HepG2 (cell line): ENCODE measurements at regions of chr10 and their contacts with region 1.

Region 1: GRCh38 chr10:57657164-57657765 is 610.4 kb downstream of the IPMK start:
- DNase-seq: peak; percentile 53
- ATAC-seq: peak; percentile 93
- H3K4me3 ChIP-seq: no peak overlapping the region
- H3K27ac ChIP-seq: no peak overlapping the region
- H3K4me1 ChIP-seq: no peaks in the 10 kb centered on the region
- H3K27me3 ChIP-seq: no peaks in the 10 kb centered on the region
- CTCF ChIP-seq: peak; percentile 85
- EP300 ChIP-seq: no peak
- POLR2A ChIP-seq: no peak
- RAD21 ChIP-seq: peak; percentile 83

Region 2: DNA sequence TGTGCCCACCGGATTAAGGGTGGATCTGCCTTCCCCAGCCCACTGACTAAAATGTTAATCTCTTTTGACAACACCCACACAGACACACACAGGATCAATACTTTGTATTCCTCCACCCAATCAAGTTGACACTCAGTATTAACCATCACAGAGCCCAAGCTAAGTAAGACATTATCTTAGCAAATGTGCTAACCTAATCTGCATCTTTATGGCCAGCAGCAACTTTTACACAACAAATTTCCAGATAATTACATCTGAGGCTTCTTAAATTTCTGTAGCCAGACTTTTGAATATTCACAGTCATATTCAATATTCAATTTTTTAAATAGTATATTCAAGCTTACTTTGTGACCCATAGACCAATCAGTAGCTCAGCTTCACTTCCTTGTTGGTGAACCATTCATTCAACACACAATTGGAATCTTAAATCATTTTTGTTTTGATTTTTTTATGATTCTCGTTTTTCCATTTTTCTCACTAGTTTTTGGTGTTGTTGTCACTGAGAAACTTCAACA is 16.2 kb after region 1 on chr10:
- CTCF ChIA-PET with region 1: no interaction called
- POLR2A ChIA-PET with region 1: no interaction called
- in situ Hi-C with region 1: no loop called
- intact Hi-C with region 1: no loop called
- DNase-seq: no peak
- ATAC-seq: no peak
- H3K4me3 ChIP-seq: no peak overlapping the region
- H3K27ac ChIP-seq: no peak overlapping the region
- H3K4me1 ChIP-seq: no peaks in the 10 kb centered on the region
- H3K27me3 ChIP-seq: no peaks in the 10 kb centered on the region
- CTCF ChIP-seq: no peak
- EP300 ChIP-seq: no peak
- POLR2A ChIP-seq: no peak
- RAD21 ChIP-seq: no peak

Region 3: GRCh38 chr10:58064714-58065528 is 407.7 kb after region 1 on chr10:
- CTCF ChIA-PET with region 1: interaction called, 6 read pairs
- POLR2A ChIA-PET with region 1: no interaction called
- in situ Hi-C with region 1: no loop called
- intact Hi-C with region 1: loop called (anchors 1 kb)
- DNase-seq: peak; percentile 35
- ATAC-seq: peak; percentile 46
- H3K4me3 ChIP-seq: no peak overlapping the region
- H3K27ac ChIP-seq: no peak overlapping the region
- H3K4me1 ChIP-seq: no peaks in the 10 kb centered on the region
- H3K27me3 ChIP-seq: peaks cover 0 to 5% of the 10 kb centered on the region in 2 experiments; a peak in 1 of 5 replicates
- CTCF ChIP-seq: peak; percentile 75
- EP300 ChIP-seq: no peak
- POLR2A ChIP-seq: no peak
- RAD21 ChIP-seq: peak; percentile 74; the same call in 1 of the 2 replicates